ENCODE measurements at regions of chr5 and their contacts with region 1.

Region 1: GRCh38 chr5:160727296-160727997 is 124.6 kb downstream of the ATP10B start:
- DNase-seq: no peak
- ATAC-seq: no peak
- H3K4me3 Mint-ChIP-seq: no peak overlapping the region
- H3K27ac Mint-ChIP-seq: no peak overlapping the region
- H3K4me1 Mint-ChIP-seq: no peaks in the 10 kb centered on the region
- H3K27me3 Mint-ChIP-seq: peaks cover 11% of the 10 kb centered on the region
- CTCF ChIP-seq: no peak

Region 2: GRCh38 chr5:159163027-159163700 is 1564.3 kb before region 1 on chr5:
- CTCF ChIA-PET with region 1: no interaction called
- POLR2A ChIA-PET with region 1: no interaction called
- intact Hi-C with region 1: no loop called
- DNase-seq: no peak
- ATAC-seq: no peak
- H3K4me3 Mint-ChIP-seq: no peak overlapping the region
- H3K27ac Mint-ChIP-seq: peak overlapping the region; percentile 4
- H3K4me1 Mint-ChIP-seq: peaks cover 10% of the 10 kb centered on the region
- H3K27me3 Mint-ChIP-seq: no peaks in the 10 kb centered on the region
- CTCF ChIP-seq: no peak

Region 3: GRCh38 chr5:160685695-160686094 is 41.8 kb before region 1 on chr5:
- CTCF ChIA-PET with region 1: no interaction called
- POLR2A ChIA-PET with region 1: no interaction called
- intact Hi-C with region 1: loop called (anchors 2 kb)
- DNase-seq: no peak
- ATAC-seq: peak; percentile 52
- H3K4me3 Mint-ChIP-seq: no peak overlapping the region
- H3K27ac Mint-ChIP-seq: no peak overlapping the region
- H3K4me1 Mint-ChIP-seq: no peaks in the 10 kb centered on the region
- H3K27me3 Mint-ChIP-seq: peaks cover 16% of the 10 kb centered on the region
- CTCF ChIP-seq: no peak